PC-3 (cell line): ENCODE measurements at regions of chr2 and their contacts with region 1.

Region 1: DNA sequence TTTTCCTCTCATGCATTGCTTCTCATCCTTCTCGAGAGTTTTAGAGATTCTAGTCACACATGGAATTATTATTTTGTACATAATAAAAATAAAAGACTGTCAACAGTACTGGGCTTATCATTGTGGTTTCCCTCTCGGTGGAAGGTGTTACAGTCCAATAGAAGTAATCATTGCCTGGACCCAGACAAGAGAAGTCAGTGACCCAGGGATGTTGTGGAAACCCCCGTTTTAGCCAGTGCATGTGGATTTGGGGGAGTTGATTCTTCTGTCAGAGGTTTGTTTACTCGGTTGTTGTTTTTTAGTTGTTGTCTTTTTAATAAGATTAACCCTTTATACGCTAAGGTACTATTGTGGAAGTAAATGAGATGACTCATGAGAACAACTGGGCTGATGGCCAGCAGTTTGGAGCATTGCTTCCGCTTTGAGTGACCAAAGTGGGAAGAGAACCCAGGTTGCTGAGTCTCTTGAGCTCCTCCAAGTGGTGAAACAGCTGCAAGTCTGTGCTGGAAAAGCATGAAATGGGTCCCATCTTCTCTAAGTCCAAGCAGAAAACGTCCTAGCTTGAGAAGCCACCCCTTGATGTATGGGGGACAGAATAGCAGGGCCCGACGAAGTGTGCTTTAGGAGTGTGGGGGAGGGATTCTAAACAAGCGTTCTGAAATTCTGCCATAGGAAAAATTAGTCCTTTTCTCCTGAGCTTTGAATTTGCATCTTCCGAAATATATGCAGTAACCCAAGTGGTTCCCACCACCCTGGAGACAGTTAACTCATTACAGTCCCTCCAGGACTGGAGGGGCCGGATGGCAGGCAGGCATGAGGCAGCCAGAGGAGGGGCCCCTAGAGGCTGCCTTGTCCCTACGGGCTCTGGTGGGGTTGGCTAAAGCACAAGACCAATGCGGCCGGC is 61.8 kb upstream of the GPR45 start:
- DNase-seq: peak; percentile 94
- ATAC-seq: peak; percentile 63
- H3K4me3 ChIP-seq: no peak overlapping the region
- H3K27ac ChIP-seq: no peak overlapping the region
- H3K4me1 ChIP-seq: peaks cover 11% of the 10 kb centered on the region
- H3K27me3 ChIP-seq: peaks cover 23% of the 10 kb centered on the region
- CTCF ChIP-seq: peak; percentile 83

Region 2: DNA sequence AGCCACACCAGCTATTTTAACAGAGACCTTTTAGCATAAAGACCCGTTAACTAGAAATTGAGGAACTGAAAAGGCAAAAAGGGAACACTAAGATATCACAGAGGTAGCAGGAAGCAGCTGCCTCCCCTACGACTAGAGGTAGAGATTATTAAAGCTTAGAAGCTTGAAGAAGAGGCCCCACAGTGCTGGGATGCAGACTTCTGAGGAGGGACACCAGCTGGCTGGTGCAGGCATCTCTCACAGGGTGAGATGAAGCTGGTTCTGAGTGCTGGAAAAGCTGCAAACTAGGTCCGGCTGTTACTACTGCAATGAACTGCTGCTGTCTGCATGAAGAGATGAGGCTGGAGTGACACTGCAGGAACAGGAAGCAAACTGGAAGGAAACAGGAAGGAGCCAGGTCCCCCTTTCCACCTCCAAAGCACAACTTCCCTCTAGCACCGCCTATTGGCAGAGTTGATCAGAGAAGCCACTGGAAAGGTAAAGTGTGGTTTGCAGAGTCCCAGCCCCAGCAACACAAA is 203.1 kb before region 1 on chr2:
- CTCF ChIA-PET with region 1: no interaction called
- POLR2A ChIA-PET with region 1: no interaction called
- intact Hi-C with region 1: no loop called
- DNase-seq: peak; percentile 49
- ATAC-seq: no peak
- H3K4me3 ChIP-seq: no peak overlapping the region
- H3K27ac ChIP-seq: no peak overlapping the region
- H3K4me1 ChIP-seq: peaks cover 6% of the 10 kb centered on the region
- H3K27me3 ChIP-seq: peaks cover 5% of the 10 kb centered on the region; the same call in 1 of the 2 replicates
- CTCF ChIP-seq: peak; percentile 56

Region 3: DNA sequence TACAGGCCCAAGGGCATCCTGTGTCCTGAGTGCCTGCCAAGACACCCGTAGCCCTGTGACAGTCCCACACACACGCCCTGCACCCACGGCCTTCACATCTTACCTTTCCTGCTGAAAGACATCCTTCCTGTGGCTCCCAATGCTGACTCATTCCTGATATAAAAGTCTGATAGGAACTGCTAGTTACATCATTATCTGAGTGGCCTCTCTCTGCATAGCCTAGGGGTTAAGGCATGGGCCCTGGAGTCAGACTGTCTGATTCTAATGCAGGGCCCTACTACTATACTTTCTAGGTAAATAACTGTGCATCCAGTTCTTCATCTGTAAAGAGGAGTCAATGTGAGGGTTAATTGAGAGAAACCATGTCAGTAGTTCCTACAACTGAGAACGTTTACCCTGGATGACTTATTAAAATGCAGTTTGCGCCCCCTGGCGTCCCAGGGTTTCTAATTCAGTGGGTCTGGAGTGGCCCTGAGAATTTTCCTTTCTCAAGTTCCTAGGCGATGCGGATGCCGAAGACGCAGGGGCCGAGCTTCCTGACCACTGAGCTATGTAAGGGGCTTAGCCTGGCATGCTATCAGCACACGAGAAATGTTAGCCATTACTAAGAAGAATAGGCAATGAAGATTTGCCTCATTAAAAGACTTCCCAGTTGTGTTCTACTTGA is 55.8 kb after region 1 on chr2:
- CTCF ChIA-PET with region 1: no interaction called
- POLR2A ChIA-PET with region 1: no interaction called
- intact Hi-C with region 1: loop called (anchors 1 kb)
- DNase-seq: peak; percentile 89
- ATAC-seq: peak; percentile 86
- H3K4me3 ChIP-seq: no peak overlapping the region
- H3K27ac ChIP-seq: no peak overlapping the region
- H3K4me1 ChIP-seq: no peaks in the 10 kb centered on the region
- H3K27me3 ChIP-seq: no peaks in the 10 kb centered on the region; the same call in 1 of the 2 replicates
- CTCF ChIP-seq: peak; percentile 93

Region 4: GRCh38 chr2:105541189-105542050 is 361.7 kb after region 1 on chr2:
- CTCF ChIA-PET with region 1: no interaction called
- POLR2A ChIA-PET with region 1: no interaction called
- intact Hi-C with region 1: no loop called
- DNase-seq: no peak
- ATAC-seq: no peak
- H3K4me3 ChIP-seq: no peak overlapping the region
- H3K27ac ChIP-seq: no peak overlapping the region
- H3K4me1 ChIP-seq: peaks cover 4% of the 10 kb centered on the region
- H3K27me3 ChIP-seq: no peaks in the 10 kb centered on the region
- CTCF ChIP-seq: no peak

Region 5: GRCh38 chr2:105888625-105889400 is 709.1 kb after region 1 on chr2:
- CTCF ChIA-PET with region 1: interaction called, 11 read pairs
- POLR2A ChIA-PET with region 1: no interaction called
- intact Hi-C with region 1: no loop called
- DNase-seq: peak; percentile 24
- ATAC-seq: no peak
- H3K4me3 ChIP-seq: no peak overlapping the region
- H3K27ac ChIP-seq: no peak overlapping the region
- H3K4me1 ChIP-seq: no peaks in the 10 kb centered on the region
- H3K27me3 ChIP-seq: no peaks in the 10 kb centered on the region
- CTCF ChIP-seq: peak; percentile 36